ENCODE measurements at regions of chr4 and their contacts with region 1.

Region 1: GRCh38 chr4:139509727-139510410 is 46.1 kb downstream of the SETD7 start:
- DNase-seq: peak; percentile 40
- H3K4me3 ChIP-seq: no peak overlapping the region
- H3K27ac ChIP-seq: no peak overlapping the region
- H3K4me1 ChIP-seq: peaks cover 7% of the 10 kb centered on the region
- H3K27me3 ChIP-seq: no peaks in the 10 kb centered on the region
- CTCF ChIP-seq: peak; percentile 59

Region 2: GRCh38 chr4:139184129-139184528 is 325.7 kb before region 1 on chr4:
- CTCF ChIA-PET with region 1: no interaction called
- POLR2A ChIA-PET with region 1: no interaction called
- intact Hi-C with region 1: loop called (anchors 10 kb)
- DNase-seq: peak; percentile 48
- H3K4me3 ChIP-seq: no peak overlapping the region
- H3K27ac ChIP-seq: no peak overlapping the region
- H3K4me1 ChIP-seq: peaks cover 11% of the 10 kb centered on the region
- H3K27me3 ChIP-seq: no peaks in the 10 kb centered on the region
- CTCF ChIP-seq: peak; percentile 49; the same call in 1 of the 2 replicates

Region 3: DNA sequence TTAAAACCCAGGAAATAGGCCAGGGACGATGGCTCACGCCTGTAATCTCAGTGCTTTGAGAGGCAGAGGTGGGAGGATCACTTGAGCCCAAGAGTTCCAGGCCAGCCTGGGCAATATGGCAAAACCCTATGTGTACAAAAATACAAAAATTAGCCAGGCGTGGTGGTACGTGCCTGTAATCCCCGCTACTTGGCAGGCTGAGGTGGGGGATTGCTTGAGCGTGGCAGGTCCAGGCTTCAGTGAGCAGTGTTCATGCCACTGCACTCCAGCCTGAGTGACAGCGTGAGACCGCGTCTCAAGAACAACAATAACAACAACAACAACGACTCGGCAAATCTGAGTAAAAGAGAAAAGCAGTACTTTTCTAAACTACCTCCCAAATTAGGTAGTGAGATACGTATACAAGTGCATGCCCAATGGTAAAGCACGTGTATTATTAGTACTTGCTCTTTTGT is 194.6 kb before region 1 on chr4:
- CTCF ChIA-PET with region 1: no interaction called
- POLR2A ChIA-PET with region 1: no interaction called
- intact Hi-C with region 1: no loop called
- DNase-seq: no peak
- H3K4me3 ChIP-seq: no peak overlapping the region
- H3K27ac ChIP-seq: no peak overlapping the region
- H3K4me1 ChIP-seq: peaks cover 15% of the 10 kb centered on the region
- H3K27me3 ChIP-seq: no peaks in the 10 kb centered on the region
- CTCF ChIP-seq: no peak